ENCODE measurements at regions of chr1 and their contacts with region 1.

Region 1: GRCh38 chr1:222617367-222617951 is 438 bp upstream of the MIA3 start:
- DNase-seq: peak; percentile 90
- ATAC-seq: peak; percentile 86
- H3K4me3 ChIP-seq: peak overlapping the region; percentile 61
- H3K27ac ChIP-seq: no peak overlapping the region
- H3K4me1 ChIP-seq: peaks cover 13% of the 10 kb centered on the region
- H3K27me3 ChIP-seq: no peaks in the 10 kb centered on the region
- CTCF ChIP-seq: no peak

Region 2: GRCh38 chr1:222600281-222600680 is 17.2 kb before region 1 on chr1:
- CTCF ChIA-PET with region 1: no interaction called
- POLR2A ChIA-PET with region 1: no interaction called
- intact Hi-C with region 1: loop called (anchors 1 kb)
- DNase-seq: peak; percentile 92
- ATAC-seq: peak; percentile 87
- H3K4me3 ChIP-seq: peak overlapping the region; percentile 1; the same call in 1 of the 2 replicates
- H3K27ac ChIP-seq: peak overlapping the region; percentile 70
- H3K4me1 ChIP-seq: peaks cover 32% of the 10 kb centered on the region
- H3K27me3 ChIP-seq: no peaks in the 10 kb centered on the region
- CTCF ChIP-seq: no peak

Region 3: GRCh38 chr1:222643938-222644635 is 26.6 kb after region 1 on chr1:
- CTCF ChIA-PET with region 1: no interaction called
- POLR2A ChIA-PET with region 1: no interaction called
- intact Hi-C with region 1: loop called (anchors 1 kb)
- DNase-seq: peak; percentile 100
- ATAC-seq: peak; percentile 93
- H3K4me3 ChIP-seq: peak overlapping the region; percentile 89
- H3K27ac ChIP-seq: peak overlapping the region; percentile 77
- H3K4me1 ChIP-seq: peaks cover 32% of the 10 kb centered on the region
- H3K27me3 ChIP-seq: no peaks in the 10 kb centered on the region
- CTCF ChIP-seq: no peak

Region 4: GRCh38 chr1:222805858-222806257 is 188.4 kb after region 1 on chr1:
- CTCF ChIA-PET with region 1: no interaction called
- POLR2A ChIA-PET with region 1: no interaction called
- intact Hi-C with region 1: no loop called
- DNase-seq: no peak
- ATAC-seq: no peak
- H3K4me3 ChIP-seq: no peak overlapping the region
- H3K27ac ChIP-seq: no peak overlapping the region
- H3K4me1 ChIP-seq: no peaks in the 10 kb centered on the region
- H3K27me3 ChIP-seq: no peaks in the 10 kb centered on the region
- CTCF ChIP-seq: 0 out of 2 replicates have a peak, but pooled peaks have one; percentile 16

Region 5: DNA sequence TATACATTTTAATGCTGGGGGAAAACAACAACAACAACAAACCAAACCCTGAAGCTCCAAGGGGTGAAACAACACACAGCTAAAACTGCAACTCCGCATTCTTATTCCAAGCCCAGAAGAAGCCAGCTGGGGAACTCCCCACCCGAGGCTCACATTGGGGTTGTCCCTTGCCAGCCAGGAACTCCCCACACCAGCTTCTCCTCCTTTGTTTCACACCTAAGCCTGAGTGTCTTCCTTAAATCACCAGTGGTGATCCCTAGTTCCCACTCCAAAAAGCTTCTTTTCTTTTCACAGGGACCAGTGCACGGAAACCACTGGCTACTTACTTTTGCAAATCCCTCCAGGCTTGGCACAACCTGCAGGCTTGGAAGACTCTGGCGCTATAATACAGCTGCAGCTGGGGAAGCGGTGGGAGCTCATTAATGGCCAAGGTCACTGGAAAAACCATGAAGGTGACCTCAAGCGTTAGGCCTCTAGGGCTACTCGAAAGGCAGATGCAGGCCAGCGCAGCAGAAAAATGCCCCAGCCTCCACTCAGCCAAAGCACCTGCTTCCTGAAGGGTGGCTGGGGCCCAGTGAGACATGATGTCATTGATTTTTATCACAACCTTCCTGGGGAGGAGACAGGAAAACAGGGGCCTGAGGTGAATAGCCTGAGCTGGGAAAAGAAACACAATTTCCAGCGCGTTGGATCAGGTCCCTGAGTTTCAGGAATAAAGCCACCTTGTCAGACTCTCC is 485.5 kb after region 1 on chr1:
- CTCF ChIA-PET with region 1: no interaction called
- POLR2A ChIA-PET with region 1: interaction called, 10 read pairs
- intact Hi-C with region 1: no loop called
- DNase-seq: peak; percentile 14
- ATAC-seq: no peak
- H3K4me3 ChIP-seq: no peak overlapping the region
- H3K27ac ChIP-seq: no peak overlapping the region
- H3K4me1 ChIP-seq: no peaks in the 10 kb centered on the region
- H3K27me3 ChIP-seq: no peaks in the 10 kb centered on the region
- CTCF ChIP-seq: no peak

Measured in PC-3 (cell line).